OCI-LY7 (cell line): ENCODE measurements at regions of chr19 and their contacts with region 1.

Region 1: GRCh38 chr19:47112997-47113849 is at the start of gene ZC3H4:
- DNase-seq: peak; percentile 99
- H3K4me3 ChIP-seq: peak within 1 kb of the TSS; percentile 94
- H3K27ac ChIP-seq: peak within 1 kb of the TSS; percentile 93
- H3K4me1 ChIP-seq: peaks cover 31% of the 10 kb centered on the region
- CTCF ChIP-seq: no peak
- total RNA-seq, gene ZC3H4: 16.6 and 23.0 TPM in 2 replicates

Region 2: DNA sequence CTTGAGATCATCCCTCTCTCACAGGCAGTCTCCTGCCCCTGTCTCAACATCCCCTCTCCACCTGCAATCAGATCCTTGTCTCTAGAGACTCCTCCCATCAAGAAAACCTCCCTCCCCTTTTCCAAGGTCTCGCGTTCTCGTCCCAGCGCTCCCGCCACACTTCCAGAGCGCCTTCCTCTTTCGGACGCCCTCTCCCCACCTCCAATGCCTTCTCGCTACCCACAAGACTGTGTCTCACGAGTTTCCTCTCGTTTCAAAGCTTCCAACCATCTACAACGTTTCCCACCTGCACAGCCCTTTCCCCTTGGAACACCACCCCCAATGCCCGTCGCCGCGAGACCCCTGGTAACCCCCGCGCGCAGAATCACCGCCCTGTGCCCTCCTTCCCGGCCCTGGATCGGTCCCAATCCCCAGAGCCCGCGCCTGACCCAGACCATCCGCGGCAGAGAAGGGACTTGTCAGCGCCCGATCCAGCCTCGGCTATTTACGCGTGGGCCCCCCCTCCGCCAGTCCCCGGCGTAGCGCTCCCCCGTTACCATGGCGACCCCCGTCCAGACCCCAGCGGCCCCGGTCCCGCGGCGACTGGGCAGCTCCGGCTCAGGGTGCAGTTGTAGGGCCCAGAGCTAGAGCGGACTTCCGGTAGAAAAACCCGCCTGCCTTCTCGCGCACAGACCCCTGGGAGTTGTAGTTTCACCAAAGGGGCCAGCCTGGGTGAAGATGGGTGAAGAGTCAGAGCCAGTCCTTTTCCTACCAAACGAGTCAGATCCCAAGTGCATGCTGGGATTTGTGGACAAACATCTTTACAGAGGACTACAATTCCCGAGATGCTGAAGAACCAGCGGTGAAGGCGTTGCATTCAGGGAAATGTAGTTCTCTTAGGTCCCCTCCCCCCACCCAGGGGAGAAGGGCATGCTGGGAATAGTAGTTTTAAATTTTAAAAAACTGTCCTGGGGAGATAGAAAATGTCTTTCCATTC is 262.7 kb before region 1 on chr19 and contains the start of gene AP2S1:
- CTCF ChIA-PET with region 1: no interaction called
- POLR2A ChIA-PET with region 1: no interaction called
- intact Hi-C with region 1: loop called (anchors 10 kb)
- DNase-seq: peak; percentile 98
- H3K4me3 ChIP-seq: peak within 1 kb of the TSS; percentile 90
- H3K27ac ChIP-seq: peak within 1 kb of the TSS; percentile 5
- H3K4me1 ChIP-seq: peaks cover 16% of the 10 kb centered on the region
- CTCF ChIP-seq: no peak
- total RNA-seq, gene AP2S1: 105 and 110 TPM in 2 replicates

Region 3: GRCh38 chr19:47075179-47075810 is 37.9 kb before region 1 on chr19:
- CTCF ChIA-PET with region 1: no interaction called
- POLR2A ChIA-PET with region 1: no interaction called
- intact Hi-C with region 1: loop called (anchors 5 kb)
- DNase-seq: no peak
- H3K4me3 ChIP-seq: no peak overlapping the region
- H3K27ac ChIP-seq: no peak overlapping the region
- H3K4me1 ChIP-seq: no peaks in the 10 kb centered on the region
- CTCF ChIP-seq: no peak

Region 4: DNA sequence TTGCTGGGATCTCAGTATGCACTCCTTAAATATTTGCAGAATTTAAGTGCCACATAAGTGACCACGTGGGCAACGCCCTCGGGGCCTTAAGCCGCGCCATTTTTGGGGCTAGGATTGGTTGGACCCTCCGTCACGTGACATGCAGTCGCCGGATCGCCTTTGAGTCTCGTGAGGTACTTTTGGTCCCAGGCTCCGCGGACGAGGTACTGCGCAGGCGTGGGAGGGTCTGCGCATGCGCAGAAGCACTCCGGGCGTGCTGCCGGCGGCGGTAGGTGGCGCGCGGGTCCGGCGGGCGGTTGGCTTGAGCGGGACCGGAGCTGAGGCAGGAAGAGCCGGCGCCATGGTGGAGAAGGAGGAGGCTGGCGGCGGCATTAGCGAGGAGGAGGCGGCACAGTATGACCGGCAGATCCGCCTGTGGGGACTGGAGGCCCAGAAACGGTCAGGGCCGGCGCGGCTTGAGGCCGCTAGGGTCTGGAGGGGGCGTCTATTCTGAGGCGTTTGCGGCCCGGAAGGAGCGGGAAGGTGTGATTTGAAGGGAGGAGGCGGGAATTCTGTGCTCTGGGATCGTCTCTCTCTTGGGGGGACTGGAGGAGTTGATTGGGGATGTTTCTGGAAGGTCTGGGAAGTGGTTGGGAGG is 17.5 kb after region 1 on chr19 and contains the start of gene SAE1:
- CTCF ChIA-PET with region 1: interaction called, 3 read pairs
- POLR2A ChIA-PET with region 1: interaction called, 12 read pairs
- intact Hi-C with region 1: no loop called
- DNase-seq: peak; percentile 100
- H3K4me3 ChIP-seq: peak within 1 kb of the TSS; percentile 93
- H3K27ac ChIP-seq: peak within 1 kb of the TSS; percentile 80
- H3K4me1 ChIP-seq: peaks cover 35% of the 10 kb centered on the region
- CTCF ChIP-seq: peak; percentile 70
- total RNA-seq, gene SAE1: 165 and 185 TPM in 2 replicates

Region 5: DNA sequence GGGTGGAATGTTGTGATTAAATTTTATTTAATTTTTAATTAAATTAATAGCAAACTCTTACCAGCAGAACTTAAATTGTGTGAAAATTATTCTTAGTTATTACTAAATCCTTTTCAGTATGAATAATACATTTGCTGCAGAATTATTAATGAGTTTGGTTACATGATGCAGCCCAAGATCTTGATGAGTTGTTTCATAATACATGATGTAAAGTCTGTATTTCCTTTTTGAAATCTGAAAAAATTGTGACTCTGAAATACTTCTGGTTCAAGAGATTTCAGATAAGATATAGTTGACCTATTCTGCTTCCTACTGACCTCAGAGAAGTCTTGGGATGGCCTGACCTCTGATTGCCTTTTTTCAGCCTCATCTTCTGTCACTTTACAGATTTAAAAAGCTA is 28.5 kb after region 1 on chr19:
- CTCF ChIA-PET with region 1: no interaction called
- POLR2A ChIA-PET with region 1: interaction called, 10 read pairs
- intact Hi-C with region 1: no loop called
- DNase-seq: no peak
- H3K4me3 ChIP-seq: no peak overlapping the region
- H3K27ac ChIP-seq: no peak overlapping the region
- H3K4me1 ChIP-seq: no peaks in the 10 kb centered on the region
- CTCF ChIP-seq: no peak